ENCODE measurements at regions of chr17 and their contacts with region 1.

Region 1: DNA sequence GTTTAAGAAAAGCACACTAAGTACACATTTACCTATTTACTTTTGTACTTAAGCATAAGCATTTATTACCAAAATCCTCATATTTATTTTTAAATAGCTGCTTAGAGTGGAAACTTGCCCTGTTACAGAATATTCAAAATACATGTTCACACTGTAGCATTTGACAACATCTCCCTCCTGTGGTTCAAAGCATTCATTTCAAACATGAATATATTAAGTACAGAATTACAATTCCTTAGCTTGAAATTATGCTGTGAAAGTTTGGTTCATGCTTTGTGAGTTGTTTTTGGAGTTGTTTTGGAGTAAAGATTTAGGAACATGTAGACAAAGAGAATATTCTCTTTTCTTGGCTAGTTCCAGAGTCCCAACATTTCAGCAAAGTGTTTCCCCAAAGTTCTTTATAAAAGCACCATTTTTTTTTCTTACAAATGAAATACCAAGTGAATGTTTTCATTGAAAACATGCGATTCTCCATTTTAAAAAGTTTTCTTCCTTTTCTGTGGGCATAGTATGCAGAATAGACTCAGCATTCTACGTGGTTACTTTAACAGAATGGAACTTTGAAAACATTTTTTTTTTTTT is 33.2 kb downstream of the TUBD1 start:
- DNase-seq: no peak
- H3K4me3 ChIP-seq: no peak overlapping the region
- H3K27ac ChIP-seq: no peak overlapping the region
- H3K4me1 ChIP-seq: peaks cover 0 to 10% of the 10 kb centered on the region in 2 donors
- H3K27me3 ChIP-seq: no peaks in the 10 kb centered on the region
- CTCF ChIP-seq: peak; percentile 50 to 71 (median 70)

Region 2: GRCh38 chr17:59746849-59747445 is 112.6 kb before region 1 on chr17:
- intact Hi-C with region 1: loop called (anchors 1 kb)
- DNase-seq: no peak
- H3K4me3 ChIP-seq: no peak overlapping the region
- H3K27ac ChIP-seq: no peak overlapping the region
- H3K4me1 ChIP-seq: no peaks in the 10 kb centered on the region
- H3K27me3 ChIP-seq: no peaks in the 10 kb centered on the region
- CTCF ChIP-seq: peak; percentile 32 to 69 (median 67)

Region 3: GRCh38 chr17:59753522-59754467 is 105.7 kb before region 1 on chr17:
- intact Hi-C with region 1: loop called (anchors 1 kb)
- DNase-seq: no peak
- H3K4me3 ChIP-seq: peak overlapping the region in 1 of 2 donors; percentile 30
- H3K27ac ChIP-seq: peak overlapping the region; percentile 56 to 65
- H3K4me1 ChIP-seq: peaks cover 0 to 17% of the 10 kb centered on the region in 2 donors
- H3K27me3 ChIP-seq: no peaks in the 10 kb centered on the region
- CTCF ChIP-seq: peak; percentile 60 to 69 (median 66)

Region 4: DNA sequence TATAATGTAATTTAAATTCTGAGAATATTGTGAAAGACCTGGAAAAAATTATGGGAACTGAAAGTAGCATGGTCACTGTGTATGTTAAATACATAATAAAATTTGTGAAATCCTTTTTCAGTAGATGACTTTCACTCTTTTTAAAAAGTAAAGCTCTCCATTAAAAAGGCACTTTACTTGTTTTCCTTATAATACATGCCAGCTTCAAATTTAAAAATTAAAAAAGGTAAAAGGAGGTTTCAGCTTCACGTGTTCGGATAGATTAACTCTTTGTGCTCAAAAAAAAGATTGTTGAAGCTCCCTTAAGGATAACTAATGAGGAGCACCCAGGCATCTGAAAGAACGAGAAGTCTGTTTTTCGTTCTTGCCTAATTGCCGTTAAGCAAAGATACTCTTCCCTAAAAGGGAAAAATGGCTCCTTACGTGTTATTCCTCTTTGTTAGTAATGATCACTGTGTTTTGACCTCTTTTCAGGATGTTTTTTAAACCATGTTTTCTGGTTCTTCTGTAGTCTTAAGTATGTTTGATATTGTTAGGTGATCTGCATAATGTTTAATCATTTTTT is 54.6 kb before region 1 on chr17:
- intact Hi-C with region 1: no loop called
- DNase-seq: no peak
- H3K4me3 ChIP-seq: peak overlapping the region; percentile 27 to 56
- H3K27ac ChIP-seq: peak overlapping the region; percentile 64 to 66
- H3K4me1 ChIP-seq: peaks cover 3 to 6% of the 10 kb centered on the region in 2 donors
- H3K27me3 ChIP-seq: no peaks in the 10 kb centered on the region
- CTCF ChIP-seq: no peak

Measured in ascending aorta (tissue), 2 donors.